Cardiac septum (tissue), 1 donor: ENCODE measurements at regions of chr5 and their contacts with region 1.

Region 1: DNA sequence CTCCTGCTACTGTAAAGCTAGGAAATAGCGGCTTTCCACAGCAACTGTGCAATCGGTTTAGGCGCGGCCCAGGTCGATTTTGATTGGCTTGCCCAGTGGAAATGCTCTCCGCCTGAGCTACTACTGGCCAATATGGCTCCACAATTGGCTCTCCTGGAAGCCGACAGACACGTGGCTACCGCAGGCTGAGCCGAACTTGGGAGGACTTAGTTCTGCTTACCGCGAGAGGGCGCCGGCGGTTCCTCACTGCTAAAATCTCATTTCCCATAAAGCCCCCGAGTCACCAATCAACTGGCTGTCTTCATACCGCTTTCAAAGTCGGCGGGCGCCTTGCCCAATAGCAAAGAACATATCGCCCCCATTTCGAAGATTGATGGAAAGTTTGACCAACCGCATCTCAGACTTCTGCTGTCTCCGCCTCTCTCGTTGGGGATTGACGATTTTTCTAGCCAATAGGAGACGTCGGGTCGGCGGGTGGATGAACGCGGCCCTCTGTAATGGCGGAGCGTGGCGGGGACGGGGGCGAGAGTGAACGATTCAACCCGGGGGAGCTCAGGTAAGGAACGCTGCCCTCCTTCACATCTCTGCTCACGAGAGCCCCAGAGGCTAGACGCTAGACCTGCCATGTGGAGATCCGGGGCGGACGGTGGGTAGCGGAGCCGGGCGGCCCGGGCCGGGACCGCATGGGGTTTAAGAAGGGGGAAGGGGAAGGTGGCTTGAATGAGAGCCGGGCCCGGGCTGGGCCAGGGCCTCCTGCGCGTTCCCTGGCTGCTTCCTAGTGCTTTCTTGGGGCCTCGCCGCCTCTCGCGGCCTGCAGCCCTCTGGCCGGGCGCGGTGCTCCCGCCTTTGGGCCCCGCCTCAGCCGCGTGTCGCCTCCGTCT is at the start of gene TCERG1:
- DNase-seq: peak; percentile 98
- total RNA-seq, gene TCERG1: 33.2 TPM

Region 2: DNA sequence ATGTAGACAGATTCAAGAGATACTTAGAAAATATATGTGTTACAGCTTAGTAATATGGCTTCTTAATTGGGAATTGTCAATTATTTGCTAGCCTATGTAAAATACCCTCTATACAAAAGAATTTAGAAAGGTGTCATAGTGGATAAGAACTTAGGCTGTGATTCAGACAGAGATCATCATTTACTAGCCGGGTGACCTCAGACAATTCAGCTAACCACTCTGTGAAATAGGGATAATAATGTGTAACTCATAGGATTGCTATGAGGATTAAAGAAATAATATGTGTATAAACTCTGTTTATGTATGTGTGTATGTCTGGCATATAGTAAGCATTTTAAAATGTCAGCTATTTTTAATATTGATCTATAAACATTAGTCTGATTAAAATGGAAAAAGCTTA is 258.7 kb before region 1 on chr5:
- intact Hi-C with region 1: loop called (anchors 10 kb)
- DNase-seq: no peak

Region 3: DNA sequence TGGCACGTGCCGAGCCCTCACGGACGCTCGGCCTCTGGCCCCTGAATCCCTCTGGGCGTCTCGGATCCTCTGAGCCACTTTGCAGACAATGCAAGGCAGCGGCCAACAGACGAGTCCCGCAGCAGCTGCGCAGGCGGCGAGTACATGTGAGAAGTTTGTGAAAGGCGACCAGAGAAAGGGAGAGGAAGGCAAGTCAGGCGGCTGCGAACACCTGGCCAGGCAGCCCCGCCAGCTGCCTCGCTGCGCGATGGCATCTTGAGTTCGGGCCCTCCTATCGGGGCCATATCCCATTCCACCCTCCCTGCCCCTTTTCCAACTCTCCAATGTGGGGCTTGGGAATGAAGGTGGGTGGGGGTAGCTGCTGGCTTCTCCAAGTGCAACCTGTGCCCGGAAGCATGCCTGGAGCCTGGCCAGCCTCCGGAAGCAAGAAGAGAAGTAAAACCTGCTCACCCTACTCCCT is 113.0 kb before region 1 on chr5:
- intact Hi-C with region 1: no loop called
- DNase-seq: no peak